ENCODE measurements at regions of chr17 and their contacts with region 1.

Region 1: DNA sequence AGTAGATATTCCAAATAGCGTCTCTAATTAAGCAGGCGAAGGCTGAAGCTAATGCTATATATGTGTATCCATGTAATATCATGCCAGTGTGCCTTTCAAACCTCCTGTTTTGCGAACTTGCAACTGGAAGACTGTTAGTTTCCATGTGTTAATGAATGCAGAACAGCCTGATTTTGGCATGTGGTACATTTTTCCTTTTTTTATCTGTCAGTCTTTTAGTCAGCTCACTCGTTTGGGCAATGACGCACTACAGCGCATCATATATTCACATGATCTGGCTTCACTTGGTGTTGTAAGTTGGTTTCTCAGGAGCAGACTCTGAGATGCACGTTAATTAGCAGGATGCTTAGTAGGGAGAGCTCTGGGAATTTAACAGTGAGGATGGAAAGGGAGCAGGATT is 210.4 kb upstream of the CA10 start:
- DNase-seq: no peak
- ATAC-seq: no peak
- H3K4me3 ChIP-seq: no peak overlapping the region
- H3K27ac ChIP-seq: no peak overlapping the region
- H3K4me1 ChIP-seq: no peaks in the 10 kb centered on the region
- H3K27me3 ChIP-seq: no peaks in the 10 kb centered on the region
- CTCF ChIP-seq: no peak

Region 2: DNA sequence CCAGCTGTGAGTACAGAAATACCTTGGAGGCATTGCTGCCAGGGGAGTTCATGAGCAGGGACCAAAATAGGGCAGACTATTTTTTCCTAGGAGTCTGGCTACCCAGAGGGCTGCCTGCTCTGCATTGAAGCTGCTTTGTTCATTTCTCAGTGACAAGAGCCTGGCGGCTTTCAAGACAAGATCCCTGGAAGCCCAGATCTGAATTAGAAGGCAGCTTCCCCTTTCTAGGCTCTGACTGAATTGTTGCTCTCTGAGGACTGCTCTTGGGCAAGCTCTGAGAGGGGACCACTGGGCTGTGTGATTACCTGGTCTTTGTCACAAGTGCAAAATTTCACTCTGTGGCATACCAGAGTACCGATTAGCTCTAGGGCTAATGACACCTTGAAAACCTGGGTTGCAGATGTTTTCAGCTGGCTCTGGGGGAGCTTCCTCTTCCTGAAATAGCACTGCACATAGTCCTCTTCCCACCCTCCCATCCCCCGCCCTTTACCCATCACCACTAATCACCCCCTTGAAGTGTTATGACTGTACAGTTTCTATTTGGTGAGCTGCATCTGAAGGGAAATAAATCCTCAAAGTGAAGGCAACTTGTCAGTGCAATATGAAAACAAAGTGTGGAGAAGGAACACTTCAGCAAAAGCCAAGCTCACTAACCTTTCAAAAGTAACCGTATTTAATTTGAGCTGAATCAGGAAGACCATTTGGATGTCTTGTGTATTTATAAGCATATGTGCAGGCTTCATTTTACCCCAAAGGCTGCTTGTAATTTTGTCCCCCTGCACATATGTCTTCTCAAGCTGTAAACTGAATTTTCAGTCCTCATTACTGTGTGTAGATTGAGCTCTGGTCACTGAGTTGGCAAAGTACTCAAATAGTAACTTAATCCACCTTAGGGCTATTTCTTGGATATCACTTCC is 166.5 kb before region 1 on chr17:
- intact Hi-C with region 1: no loop called
- DNase-seq: no peak
- ATAC-seq: peak in 1 of 8 donors; percentile 45
- H3K4me3 ChIP-seq: no peak overlapping the region
- H3K27ac ChIP-seq: no peak overlapping the region
- H3K4me1 ChIP-seq: no peaks in the 10 kb centered on the region
- H3K27me3 ChIP-seq: no peaks in the 10 kb centered on the region
- CTCF ChIP-seq: no peak

Region 3: DNA sequence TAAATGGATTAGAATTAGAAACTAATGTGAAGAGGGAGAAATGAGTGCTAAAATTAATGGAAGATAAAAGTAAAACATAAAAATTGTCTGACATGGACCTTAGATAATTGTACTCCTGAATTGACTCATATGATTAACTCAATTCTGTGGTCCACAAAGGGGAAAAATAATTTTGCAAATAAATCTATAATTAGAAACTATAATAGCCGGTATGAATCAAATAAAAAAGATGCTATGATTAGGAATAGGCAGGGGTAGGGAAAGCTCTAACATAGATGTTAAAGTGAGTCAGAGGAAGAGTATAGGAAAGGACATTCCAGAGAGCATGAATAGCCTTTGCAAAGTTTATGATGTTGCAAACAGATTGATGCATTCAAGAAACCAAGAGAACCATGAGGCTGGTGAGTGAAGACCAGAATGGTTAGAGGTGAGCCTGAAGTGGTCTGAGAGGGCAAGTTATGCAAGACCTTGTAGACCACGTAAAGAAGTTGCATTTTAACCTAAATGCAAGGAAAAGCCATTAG is 51.7 kb after region 1 on chr17:
- intact Hi-C with region 1: loop called in 1 of 10 experiments (anchors 10 kb)
- DNase-seq: no peak
- ATAC-seq: no peak
- H3K4me3 ChIP-seq: no peak overlapping the region
- H3K27ac ChIP-seq: no peak overlapping the region
- H3K4me1 ChIP-seq: no peaks in the 10 kb centered on the region
- H3K27me3 ChIP-seq: no peaks in the 10 kb centered on the region
- CTCF ChIP-seq: no peak

Measured in heart right ventricle (tissue), 16 donors.